ENCODE measurements at regions of chr16 and their contacts with region 1.

Region 1: DNA sequence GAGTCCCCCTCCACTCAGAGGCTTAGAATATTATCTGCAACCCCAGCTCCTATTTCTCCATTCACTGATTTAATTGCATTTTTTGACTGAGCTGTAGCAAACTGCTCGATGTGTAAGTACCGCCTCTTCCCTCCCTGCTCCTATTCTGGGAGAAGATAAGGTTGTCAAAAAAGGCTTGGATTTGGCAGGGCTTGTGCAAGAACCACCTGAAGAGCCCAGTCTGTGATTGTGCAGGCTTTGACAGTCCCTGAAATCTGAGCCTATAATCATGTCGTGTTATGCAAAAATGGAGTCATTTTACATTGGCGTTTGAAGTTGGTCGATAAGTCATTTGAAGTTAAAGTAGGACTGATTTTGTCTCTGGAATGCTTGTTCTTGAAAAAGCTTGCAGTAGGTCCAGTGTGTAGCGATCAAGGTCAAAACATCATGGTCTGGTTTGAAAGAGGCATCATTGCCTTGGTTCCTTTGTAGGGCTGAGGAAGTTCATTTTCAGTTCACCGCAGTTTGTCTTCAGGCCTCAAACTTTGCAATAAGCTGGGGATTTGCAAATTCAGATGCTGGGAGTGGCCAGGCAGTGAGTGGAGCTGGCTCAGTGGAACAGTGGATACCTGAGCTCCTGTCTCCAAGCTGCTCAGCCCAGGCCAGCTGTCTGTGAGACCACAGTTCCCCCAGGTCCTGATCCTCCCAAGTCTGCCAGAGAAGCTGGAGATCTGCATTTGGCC is 68.8 kb downstream of the KATNIP start:
- ATAC-seq: peak in 4 of 8 experiments; percentile 34 to 98 (median 96)
- H3K4me3 ChIP-seq: no peak overlapping the region
- H3K27ac ChIP-seq: peak overlapping the region; percentile 5 to 6
- H3K4me1 ChIP-seq: peaks cover 13 to 20% of the 10 kb centered on the region in 2 donors

Region 2: GRCh38 chr16:27169511-27170071 is 449.2 kb before region 1 on chr16:
- in situ Hi-C with region 1: no loop called
- ATAC-seq: peak in 3 of 8 experiments; percentile 22 to 72 (median 23)
- H3K4me3 ChIP-seq: no peak overlapping the region
- H3K27ac ChIP-seq: no peak overlapping the region
- H3K4me1 ChIP-seq: no peaks in the 10 kb centered on the region

Region 3: DNA sequence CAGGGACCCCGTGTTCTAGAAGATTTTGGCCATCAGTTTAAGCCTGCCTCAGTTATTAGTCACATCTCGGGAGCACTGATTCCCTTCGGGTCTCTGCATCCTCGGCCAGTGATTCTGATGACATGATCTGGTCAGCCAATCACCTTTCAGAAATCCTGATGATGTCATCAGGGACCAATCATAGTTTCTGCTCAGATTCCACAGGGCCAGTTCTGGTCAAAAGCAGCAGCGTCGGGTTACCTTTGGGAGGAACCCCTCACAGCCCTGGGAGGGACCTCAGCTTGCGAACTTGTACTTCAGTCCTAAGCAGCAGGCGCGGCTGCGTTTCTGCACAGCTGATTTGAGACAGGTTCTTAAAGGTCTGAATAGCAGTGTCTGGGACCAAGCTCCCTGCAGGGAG is 401.5 kb before region 1 on chr16:
- in situ Hi-C with region 1: no loop called
- ATAC-seq: peak in 7 of 8 experiments; percentile 72 to 96 (median 94)
- H3K4me3 ChIP-seq: peak overlapping the region in 1 of 5 donors; percentile 5
- H3K27ac ChIP-seq: peak overlapping the region; percentile 44 to 66
- H3K4me1 ChIP-seq: peaks cover 0 to 9% of the 10 kb centered on the region in 2 donors

Region 4: GRCh38 chr16:27676839-27677238 is 58.1 kb after region 1 on chr16:
- in situ Hi-C with region 1: no loop called
- ATAC-seq: peak in 2 of 8 experiments; percentile 70 to 79
- H3K4me3 ChIP-seq: no peak overlapping the region
- H3K27ac ChIP-seq: no peak overlapping the region
- H3K4me1 ChIP-seq: no peaks in the 10 kb centered on the region

Region 5: GRCh38 chr16:27867122-27868110 is 248.6 kb after region 1 on chr16:
- in situ Hi-C with region 1: loop called in 1 of 9 experiments (anchors 25 kb)
- ATAC-seq: peak; percentile 23 to 97 (median 68)
- H3K4me3 ChIP-seq: no peak overlapping the region
- H3K27ac ChIP-seq: peak overlapping the region in 1 of 2 donors; percentile 70
- H3K4me1 ChIP-seq: peaks cover 0 to 5% of the 10 kb centered on the region in 2 donors

Measured in motor neuron (in vitro differentiated cells).